ENCODE measurements at regions of chr10 and their contacts with region 1.

Region 1: DNA sequence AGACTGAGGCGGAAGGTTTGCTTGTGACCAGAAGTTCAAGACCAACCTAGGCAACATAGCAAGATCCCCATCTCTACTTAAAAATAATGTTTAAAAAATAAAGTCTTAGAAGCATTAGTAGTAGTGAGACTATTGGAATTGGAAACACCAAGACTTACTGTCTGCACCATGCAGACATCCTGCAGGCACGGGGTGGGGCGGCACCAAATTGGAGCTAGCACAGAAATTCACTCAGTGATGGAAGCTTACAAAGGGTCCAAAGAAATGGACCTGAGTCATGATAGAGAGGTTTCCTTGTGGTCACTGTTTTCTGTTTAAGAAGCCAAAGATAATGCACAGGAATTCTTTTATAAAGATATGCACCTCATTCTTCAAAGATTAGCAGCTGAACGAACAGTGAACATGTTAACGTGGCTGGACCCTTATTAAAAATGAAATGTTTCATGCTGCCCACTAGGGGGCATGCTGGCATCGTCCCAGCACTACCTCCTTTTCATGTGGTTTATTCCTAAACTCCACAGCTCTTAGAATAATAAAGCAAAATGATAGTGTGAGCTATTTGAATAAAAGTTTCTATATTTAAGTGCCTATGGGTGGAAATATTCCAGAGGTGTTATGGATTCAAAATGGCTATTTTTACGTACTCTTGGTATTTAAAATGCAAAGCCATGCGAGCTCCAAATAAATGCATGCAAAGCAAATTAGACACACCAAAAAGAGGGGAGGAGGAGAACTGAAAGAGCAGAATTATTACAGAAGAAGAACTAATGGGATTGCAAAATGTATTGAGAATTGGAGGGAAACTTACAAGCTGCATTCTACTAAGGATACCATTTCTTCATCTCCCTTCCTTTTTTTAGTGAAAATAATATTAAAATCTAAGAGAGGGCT is 28.6 kb downstream of the PDSS1 start:
- DNase-seq: peak; percentile 55
- H3K4me3 ChIP-seq: no peak overlapping the region
- H3K27ac ChIP-seq: no peak overlapping the region
- H3K27me3 ChIP-seq: no peaks in the 10 kb centered on the region
- CTCF ChIP-seq: peak; percentile 84

Region 2: DNA sequence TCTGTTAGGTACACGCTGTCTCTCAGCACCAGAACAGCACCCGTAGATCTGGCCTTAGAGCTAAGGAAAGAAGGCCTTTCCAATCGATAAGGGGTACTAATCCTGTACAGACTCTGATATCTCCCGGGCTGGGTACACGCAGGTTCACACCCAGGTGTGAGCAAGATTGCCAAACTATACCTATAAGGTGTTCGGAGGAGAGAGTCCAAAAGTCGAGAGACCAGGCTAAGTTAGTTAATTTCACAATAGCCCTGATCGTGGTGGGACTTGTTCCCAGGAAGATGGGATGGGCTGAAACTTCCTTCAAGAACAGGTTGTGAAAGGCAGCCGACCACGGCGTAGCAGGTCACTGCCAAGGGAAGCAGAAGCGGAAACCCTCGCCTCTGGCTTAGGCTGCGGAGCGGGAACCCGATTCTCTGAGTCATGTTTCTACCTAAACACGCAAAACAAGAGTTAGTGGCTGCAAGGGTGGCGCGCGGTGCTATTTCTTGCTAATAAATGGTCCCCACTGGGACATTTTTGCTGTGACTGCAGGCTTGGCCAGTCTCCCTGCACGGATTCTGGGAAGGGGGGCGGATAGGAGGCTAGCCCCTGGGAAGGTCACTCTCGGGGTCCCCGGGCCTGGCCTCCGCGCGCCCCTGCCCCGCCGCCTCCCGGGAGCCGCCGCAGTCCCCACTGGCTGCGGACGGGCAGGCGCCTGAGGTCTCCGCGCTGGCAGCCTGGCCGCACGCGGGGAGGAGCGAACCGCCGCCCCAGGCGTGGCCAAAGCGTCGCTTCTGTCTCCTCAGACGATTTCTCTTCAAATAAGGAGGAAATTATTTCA is 104.0 kb before region 1 on chr10:
- CTCF ChIA-PET with region 1: no interaction called
- POLR2A ChIA-PET with region 1: no interaction called
- DNase-seq: no peak
- H3K4me3 ChIP-seq: no peak overlapping the region
- H3K27ac ChIP-seq: no peak overlapping the region
- H3K27me3 ChIP-seq: no peaks in the 10 kb centered on the region
- CTCF ChIP-seq: no peak

Region 3: GRCh38 chr10:26714415-26715136 is 11.5 kb before region 1 on chr10:
- CTCF ChIA-PET with region 1: interaction called, 17 read pairs
- POLR2A ChIA-PET with region 1: no interaction called
- DNase-seq: no peak
- H3K4me3 ChIP-seq: no peak overlapping the region
- H3K27ac ChIP-seq: no peak overlapping the region
- H3K27me3 ChIP-seq: no peaks in the 10 kb centered on the region
- CTCF ChIP-seq: no peak

Region 4: GRCh38 chr10:26755443-26755903 is 29.4 kb after region 1 on chr10:
- CTCF ChIA-PET with region 1: interaction called, 10 read pairs
- POLR2A ChIA-PET with region 1: no interaction called
- DNase-seq: no peak
- H3K4me3 ChIP-seq: no peak overlapping the region
- H3K27ac ChIP-seq: no peak overlapping the region
- H3K27me3 ChIP-seq: no peaks in the 10 kb centered on the region
- CTCF ChIP-seq: no peak

Region 5: DNA sequence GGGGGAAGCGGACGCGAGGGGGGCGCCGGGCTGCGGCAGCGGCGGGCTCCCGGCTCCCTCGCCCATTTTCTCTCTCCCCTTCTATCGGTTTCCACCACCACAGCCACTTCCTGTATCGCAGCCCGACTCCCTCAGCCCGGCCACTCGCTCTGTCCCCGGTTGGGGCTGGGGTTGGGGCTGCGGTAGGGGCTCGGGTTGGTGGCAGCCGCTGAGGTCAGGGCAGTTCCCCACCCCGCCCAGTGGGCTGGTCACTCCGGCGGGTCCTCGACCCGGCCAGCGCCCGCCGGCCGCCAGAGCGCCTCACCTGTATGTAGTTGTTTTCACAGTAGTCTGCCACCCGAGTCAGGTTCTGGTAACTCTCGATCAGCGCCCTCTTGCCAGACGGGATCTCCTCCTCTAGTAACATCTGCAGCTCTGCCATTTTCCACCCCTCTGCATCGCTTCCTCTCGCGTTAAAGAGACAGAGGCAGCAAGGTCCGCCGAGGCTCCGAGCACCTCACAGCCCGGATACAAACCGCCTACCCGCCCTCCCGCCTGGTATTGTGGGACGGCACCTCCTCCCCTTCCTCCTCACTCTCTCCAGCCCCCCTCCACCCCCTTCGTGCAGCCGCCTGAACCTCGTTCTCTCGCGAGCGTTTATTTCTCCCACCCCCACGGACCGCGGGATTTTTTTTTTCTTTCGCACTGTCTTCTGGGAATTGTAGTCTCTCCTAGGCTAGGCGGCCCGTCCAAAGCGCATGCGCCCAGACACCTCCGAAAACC is 134.5 kb after region 1 on chr10 and contains the start of gene ABI1:
- CTCF ChIA-PET with region 1: interaction called, 35 read pairs
- POLR2A ChIA-PET with region 1: interaction called, 6 read pairs
- DNase-seq: peak; percentile 97
- H3K4me3 ChIP-seq: peak within 1 kb of the TSS; percentile 90
- H3K27ac ChIP-seq: peak within 1 kb of the TSS; percentile 70
- H3K27me3 ChIP-seq: peaks cover 4% of the 10 kb centered on the region
- CTCF ChIP-seq: no peak
- polyA plus RNA-seq, gene ABI1: 51.1 and 64.2 TPM in 2 replicates

Region 6: GRCh38 chr10:26881600-26882331 is 155.7 kb after region 1 on chr10:
- CTCF ChIA-PET with region 1: interaction called, 375 read pairs
- POLR2A ChIA-PET with region 1: no interaction called
- DNase-seq: peak; percentile 36
- H3K4me3 ChIP-seq: no peak overlapping the region
- H3K27ac ChIP-seq: no peak overlapping the region
- H3K27me3 ChIP-seq: no peaks in the 10 kb centered on the region
- CTCF ChIP-seq: peak; percentile 92